RWPE1 (cell line): ENCODE measurements at regions of chr21 and their contacts with region 1.

Region 1: DNA sequence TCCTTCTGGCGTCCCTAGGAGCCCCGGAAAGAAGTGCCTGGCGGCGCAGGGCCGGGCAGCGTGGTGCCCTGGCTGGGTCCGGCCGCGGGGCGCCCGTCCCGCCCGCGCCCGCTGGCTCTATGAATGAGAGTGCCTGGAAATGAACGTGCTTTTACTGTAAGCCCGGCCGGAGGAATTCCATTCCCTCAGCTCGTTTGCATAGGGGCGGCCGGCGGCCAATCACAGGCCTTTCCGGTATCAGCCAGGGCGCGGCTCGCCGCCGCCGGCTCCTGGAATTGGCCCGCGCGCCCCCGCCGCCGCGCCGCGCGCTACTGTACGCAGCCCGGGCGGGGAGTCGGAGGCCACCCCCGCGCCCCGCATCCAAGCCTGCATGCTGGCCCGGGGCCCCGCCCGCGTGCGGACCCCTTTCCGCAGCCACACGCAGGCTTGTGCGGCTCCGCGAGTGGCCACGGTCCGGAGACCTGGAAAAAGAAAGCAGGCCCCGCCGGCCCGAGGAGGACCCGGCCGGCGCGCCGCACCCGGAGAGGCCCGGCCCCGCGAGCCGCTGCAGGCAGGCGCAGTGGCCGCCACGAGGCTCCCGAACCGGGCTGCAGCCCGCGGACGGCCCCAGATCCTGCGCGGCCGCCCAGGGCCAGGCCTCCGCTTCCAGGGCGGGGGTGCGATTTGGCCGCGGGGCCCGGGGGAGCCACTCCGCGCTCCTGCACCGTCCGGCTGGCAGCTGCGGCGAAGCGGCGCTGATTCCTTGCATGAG is 160.4 kb downstream of the RUNX1 start:
- DNase-seq: peak; percentile 94
- H3K27ac ChIP-seq: peak overlapping the region; percentile 96
- CTCF ChIP-seq: no peak

Region 2: GRCh38 chr21:34745557-34746255 is 143.0 kb before region 1 on chr21:
- CTCF ChIA-PET with region 1: interaction called, 10 read pairs
- POLR2A ChIA-PET with region 1: no interaction called
- DNase-seq: peak; percentile 68
- H3K27ac ChIP-seq: peak overlapping the region; percentile 51
- CTCF ChIP-seq: peak; percentile 86

Region 3: DNA sequence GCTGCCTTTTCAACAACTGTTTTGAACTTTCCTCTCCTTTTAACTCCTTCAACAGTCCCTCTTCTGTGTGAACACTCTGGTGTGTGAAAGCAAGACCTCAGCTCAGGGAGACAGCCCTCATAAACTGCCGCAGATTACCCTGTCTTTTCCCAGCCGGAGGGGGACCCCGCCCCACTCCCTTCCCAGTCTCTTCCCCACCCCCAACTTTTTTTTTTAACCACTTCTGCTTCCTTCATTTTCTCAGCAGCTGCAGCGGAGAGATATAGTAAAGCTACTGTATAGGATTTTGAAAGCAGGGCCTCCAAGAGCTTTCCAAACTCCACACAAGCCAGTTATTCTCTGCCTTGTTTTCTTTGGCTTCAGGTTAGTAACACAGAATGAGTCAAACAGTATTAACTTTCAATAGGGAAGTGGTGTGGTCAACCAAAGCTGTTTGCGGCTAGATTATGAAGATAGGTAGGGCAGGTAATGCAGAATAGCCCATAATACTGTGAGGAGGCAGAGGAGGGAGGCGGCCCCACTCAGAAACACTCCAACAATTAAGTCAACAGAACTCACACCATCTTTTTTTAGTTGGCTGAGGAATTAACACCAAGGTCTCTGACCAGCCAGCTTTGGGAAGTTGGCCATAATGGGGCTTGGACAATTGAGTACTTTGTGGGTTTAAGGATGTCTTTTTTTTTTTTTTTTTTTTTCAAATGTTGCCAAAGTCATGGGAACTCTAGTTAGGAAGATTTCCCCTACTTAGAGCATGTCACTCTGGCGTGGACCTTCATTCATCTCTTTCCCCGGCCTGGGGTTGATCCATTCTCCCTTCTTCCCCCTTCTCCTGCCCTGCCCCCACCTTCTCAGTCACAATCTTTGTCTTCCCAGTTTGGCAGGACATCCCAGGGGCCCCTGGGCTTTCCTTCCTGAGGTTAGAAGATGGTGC is 43.0 kb before region 1 on chr21:
- CTCF ChIA-PET with region 1: no interaction called
- POLR2A ChIA-PET with region 1: interaction called, 11 read pairs
- DNase-seq: peak; percentile 72
- H3K27ac ChIP-seq: peak overlapping the region; percentile 94
- CTCF ChIP-seq: no peak

Region 4: GRCh38 chr21:35400233-35400957 is 511.7 kb after region 1 on chr21:
- CTCF ChIA-PET with region 1: interaction called, 22 read pairs
- POLR2A ChIA-PET with region 1: interaction called, 5 read pairs
- DNase-seq: peak; percentile 62
- H3K27ac ChIP-seq: no peak overlapping the region
- CTCF ChIP-seq: peak; percentile 67

Region 5: DNA sequence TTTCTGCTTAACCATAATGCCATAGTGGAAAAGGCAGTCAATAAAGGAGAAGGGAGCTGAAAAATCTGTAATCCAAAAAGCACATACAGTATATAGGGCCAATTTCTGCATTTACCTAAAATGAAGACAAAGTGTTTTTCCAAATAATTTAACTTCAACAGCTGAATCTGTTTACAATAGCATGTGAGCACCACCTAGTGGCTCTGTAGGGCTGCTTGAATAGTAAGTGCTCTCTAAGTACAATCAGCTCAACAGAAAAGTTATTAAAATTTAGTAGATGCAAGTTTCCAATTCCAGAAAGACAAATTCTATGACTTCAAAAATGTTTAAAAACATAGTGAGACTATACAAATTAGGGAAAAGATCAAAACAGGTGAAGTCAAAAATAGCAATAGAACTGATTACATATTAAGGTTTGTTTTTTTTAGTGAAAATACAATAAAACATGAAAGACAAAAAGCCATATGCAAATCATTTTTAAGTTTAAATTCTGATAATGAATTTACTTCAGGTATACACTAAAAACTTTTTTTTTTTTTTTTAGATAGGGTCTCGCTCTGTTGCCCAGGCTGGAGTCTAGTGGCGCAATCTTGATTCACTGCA is 951.6 kb after region 1 on chr21:
- CTCF ChIA-PET with region 1: interaction called, 11 read pairs
- POLR2A ChIA-PET with region 1: no interaction called
- DNase-seq: peak; percentile 54
- H3K27ac ChIP-seq: no peak overlapping the region
- CTCF ChIP-seq: peak; percentile 85